Adrenal gland (tissue), 19 donors: ENCODE measurements at regions of chr2 and their contacts with region 1.

Region 1: GRCh38 chr2:240232961-240233893 is 92.8 kb upstream of the OTOS start:
- DNase-seq: peak; percentile 93 to 99 (median 98)
- H3K4me3 ChIP-seq: peak overlapping the region in 2 of 4 donors; percentile 41 to 44
- H3K27ac ChIP-seq: peak overlapping the region in 3 of 5 donors; percentile 44 to 76 (median 45)
- H3K4me1 ChIP-seq: peaks cover 24 to 25% of the 10 kb centered on the region in 2 donors
- H3K27me3 ChIP-seq: no peaks in the 10 kb centered on the region
- CTCF ChIP-seq: peak; percentile 85 to 96 (median 90)
- POLR2A ChIP-seq: no peak

Region 2: DNA sequence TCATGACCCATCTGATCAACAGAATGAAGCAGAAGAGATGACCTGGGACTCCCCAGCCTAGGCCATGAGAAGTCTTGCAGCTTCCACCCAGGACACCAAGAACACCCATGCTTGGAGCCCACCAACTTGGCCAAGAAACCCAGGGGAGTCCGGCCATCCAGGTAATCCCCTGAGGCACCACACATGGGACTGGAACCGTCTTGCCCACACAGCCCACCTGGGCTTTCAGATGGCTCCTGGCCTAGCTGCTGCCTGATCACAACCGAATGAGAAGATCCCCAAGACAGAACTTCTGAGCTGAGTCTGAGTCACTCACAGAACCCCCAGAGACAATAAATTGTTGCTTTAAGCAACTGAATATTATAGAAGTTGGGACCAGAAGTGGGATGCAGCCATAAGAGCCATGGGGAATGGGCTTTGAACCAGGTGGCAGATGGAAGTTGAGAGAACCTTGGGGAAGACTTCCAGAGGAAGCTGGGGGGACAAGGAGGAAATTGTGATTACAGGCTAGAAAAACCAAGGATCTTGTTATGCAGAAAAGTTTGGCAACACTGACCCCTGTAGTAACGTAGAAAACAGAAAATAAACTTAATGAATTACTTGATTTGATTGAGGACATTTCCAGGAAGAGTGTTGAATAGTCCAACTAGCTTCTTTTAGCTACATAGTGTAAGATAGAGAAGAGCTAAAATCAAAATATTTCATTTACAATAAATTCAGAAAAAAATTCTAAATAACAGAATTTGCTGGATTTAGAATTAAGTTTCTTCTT is 110.1 kb after region 1 on chr2:
- intact Hi-C with region 1: loop called in 1 of 2 experiments (anchors 2 kb)
- DNase-seq: no peak
- H3K4me3 ChIP-seq: no peak overlapping the region
- H3K27ac ChIP-seq: no peak overlapping the region
- H3K4me1 ChIP-seq: no peaks in the 10 kb centered on the region
- H3K27me3 ChIP-seq: no peaks in the 10 kb centered on the region
- CTCF ChIP-seq: peak in 3 of 6 experiments; percentile 25 to 30 (median 29)
- POLR2A ChIP-seq: no peak